Right ventricle myocardium inferior (tissue), 1 donor: ENCODE measurements at regions of chr10 and their contacts with region 1.

Region 1: DNA sequence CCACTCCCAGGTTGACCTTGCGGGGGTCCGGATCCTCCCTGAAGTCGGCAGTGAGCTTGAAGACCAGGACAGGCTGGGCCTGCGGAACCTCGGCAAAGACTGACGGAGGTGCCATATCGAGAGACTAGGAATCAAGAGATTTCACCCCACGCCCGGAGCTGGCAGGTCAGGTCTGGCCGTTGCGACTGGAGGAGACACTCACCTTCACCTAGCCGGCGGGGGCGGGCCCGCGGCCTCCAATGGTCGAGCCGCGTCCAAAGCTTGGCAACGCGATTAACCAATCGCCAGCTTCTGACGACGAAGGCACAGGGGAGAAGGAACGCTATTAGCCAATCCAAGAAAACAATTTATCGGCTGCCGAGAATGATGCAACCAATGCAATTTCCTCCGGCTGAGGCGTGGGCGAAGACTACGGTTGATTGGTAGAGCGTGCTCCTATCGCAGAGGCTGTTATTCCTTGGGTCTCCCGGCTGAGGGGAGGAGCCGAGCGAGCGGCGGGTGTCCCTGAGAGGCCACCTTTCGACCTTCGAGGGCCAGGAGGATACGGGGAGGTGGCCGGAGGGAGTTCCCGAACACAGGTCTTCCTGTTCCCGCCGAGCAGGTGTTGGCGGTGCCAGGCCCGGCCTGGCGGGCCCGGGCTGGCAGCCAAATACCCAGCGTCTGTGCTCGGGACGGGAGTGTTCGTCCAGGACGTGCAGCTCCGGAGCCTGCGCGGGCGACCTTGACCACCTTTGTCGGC is at the start of gene GOT1:
- DNase-seq: peak; percentile 94
- ATAC-seq: peak; percentile 97
- total RNA-seq, gene GOT1: 507 TPM

Region 2: GRCh38 chr10:98269072-98269912 is 1161.3 kb before region 1 on chr10:
- intact Hi-C with region 1: loop called (anchors 5 kb)
- DNase-seq: peak; percentile 87
- ATAC-seq: peak; percentile 92

Region 3: GRCh38 chr10:98467506-98468346 is 962.9 kb before region 1 on chr10:
- intact Hi-C with region 1: loop called (anchors 5 kb)
- DNase-seq: peak; percentile 81
- ATAC-seq: peak; percentile 95

Region 4: GRCh38 chr10:99370993-99371392 is 59.6 kb before region 1 on chr10:
- intact Hi-C with region 1: no loop called
- DNase-seq: no peak
- ATAC-seq: no peak

Region 5: GRCh38 chr10:99395750-99396445 is 34.7 kb before region 1 on chr10:
- intact Hi-C with region 1: loop called (anchors 1 kb)
- DNase-seq: no peak
- ATAC-seq: no peak

Region 6: GRCh38 chr10:99612167-99612831 is 181.7 kb after region 1 on chr10:
- intact Hi-C with region 1: loop called (anchors 2 kb)
- DNase-seq: no peak
- ATAC-seq: peak; percentile 62

Region 7: DNA sequence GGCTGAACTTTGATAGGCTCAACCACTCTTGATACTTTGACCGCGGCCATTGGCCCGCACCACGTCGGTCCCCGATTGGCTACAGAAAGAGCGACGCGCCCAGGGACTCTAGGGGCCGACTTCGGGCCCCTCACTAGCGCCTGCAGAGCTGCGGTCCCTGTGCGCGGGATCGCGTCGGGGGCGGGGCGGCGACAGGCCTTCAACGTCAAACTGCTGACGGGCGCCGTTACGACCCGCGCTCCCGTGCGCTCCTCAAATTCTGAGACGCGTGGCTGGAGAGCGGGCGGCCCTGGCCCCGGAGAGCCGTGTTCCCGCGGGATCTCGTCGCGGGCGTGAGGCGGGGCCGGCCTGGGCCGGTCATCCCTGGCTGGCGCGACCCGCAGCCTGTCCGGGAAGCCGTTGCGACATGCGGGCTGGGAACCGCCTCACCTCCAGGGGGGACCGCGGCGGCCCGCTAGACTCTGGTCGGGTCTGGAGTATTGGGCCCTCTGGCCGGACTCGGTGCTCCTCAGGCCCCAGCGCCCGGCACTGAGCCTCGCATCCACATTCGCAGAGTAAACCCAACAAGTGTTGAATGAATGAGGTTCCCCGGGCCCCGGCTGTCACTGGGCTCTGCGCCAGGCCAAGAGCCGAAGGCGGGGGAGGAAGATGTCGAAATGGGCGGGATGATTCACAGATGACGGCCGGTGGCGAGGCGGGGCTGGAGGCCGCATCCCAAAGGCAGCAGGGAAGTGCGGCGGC is 190.3 kb after region 1 on chr10:
- intact Hi-C with region 1: loop called (anchors 2 kb)
- DNase-seq: peak; percentile 97
- ATAC-seq: peak; percentile 93

Region 8: DNA sequence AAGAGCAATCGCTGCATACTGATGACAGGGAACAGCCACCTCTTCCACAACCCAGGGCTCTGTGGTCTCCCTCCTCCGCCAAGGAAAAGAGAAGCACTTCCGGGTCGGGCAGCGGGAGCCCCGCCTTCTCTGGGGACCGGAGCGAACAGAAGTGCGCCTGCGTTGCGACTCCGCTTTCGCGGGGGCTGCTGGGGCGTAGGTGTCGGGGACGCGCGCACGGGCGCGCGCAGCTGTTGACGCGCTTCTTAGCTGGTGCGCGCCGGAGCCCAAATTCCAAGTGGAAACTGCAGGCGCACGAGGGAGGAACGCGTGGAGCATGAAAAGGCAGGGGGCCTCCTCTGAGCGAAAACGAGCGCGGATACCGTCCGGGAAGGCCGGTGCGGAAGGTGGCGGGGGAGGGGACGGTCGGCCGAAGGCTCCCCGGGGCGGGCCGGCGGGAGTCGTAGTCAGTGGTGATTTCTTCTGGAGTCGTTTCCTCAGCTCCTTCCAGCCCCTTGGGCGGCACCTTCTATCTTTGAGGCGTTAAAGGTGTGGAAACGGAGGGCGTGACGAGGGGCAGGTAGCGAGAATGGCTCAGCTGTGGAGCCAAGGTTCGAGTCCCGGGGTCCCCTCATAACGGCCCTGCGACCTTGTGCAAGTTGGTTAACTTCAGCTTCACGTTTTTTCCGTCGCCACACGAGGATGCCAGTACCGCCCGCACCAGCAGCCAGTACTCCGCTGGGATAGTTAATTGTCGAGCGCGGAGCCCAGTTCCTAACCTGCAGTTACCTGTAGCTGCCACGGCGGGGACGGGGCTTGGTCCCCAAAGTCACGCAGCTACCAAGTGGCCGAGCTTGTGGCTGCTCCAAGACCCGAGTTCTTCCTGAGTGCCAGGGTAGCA is 301.7 kb after region 1 on chr10 and contains the starts of genes COX15 and CUTC:
- intact Hi-C with region 1: loop called (anchors 5 kb)
- DNase-seq: peak; percentile 98
- ATAC-seq: peak; percentile 99
- total RNA-seq, gene COX15: 30.1 TPM
- total RNA-seq, gene CUTC: 37.2 TPM